GM23248 (cell line): ENCODE measurements at regions of chr5 and their contacts with region 1.

Region 1: DNA sequence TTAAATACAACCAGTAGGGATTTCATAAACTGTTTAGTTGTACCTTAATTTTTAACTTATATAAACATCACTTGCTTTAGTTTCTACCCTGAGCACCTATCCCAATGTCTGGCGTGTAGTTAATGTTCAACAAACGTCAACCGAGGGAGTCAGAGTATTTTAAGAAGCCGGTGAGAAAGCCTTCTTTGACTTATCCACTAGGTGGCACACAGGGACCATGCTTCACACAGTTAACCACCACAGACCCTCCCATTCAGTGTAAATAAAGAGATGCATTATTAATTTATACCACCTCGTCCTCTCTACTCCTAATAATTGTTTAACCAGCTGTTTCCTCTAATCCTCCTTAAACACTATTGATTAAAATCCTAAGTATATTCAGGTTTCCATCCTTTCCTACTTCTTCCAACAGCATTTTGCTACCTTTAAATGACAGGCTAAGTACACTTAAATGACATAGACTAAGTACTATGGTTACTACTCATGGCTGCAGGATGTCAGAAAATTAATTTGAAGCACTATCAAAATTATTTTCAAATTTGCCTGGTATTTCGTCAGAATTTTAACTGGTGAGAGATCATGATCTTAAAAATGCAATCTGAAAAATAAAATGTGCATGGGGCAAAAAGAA is 2.3 kb downstream of the HAPLN1 start:
- DNase-seq: peak; percentile 83
- H3K4me3 ChIP-seq: peak overlapping the region; percentile 75
- H3K27ac ChIP-seq: no peak overlapping the region
- H3K4me1 ChIP-seq: peaks cover 6% of the 10 kb centered on the region; the same call in 1 of the 2 replicates
- H3K27me3 ChIP-seq: 0 out of 2 replicates have a peak, but pooled peaks cover 8% of the 10 kb centered on the region

Region 2: GRCh38 chr5:84149094-84149493 is 430.8 kb after region 1 on chr5:
- in situ Hi-C with region 1: no loop called
- DNase-seq: no peak
- H3K4me3 ChIP-seq: no peak overlapping the region
- H3K27ac ChIP-seq: no peak overlapping the region
- H3K4me1 ChIP-seq: no peaks in the 10 kb centered on the region
- H3K27me3 ChIP-seq: no peaks in the 10 kb centered on the region

Region 3: DNA sequence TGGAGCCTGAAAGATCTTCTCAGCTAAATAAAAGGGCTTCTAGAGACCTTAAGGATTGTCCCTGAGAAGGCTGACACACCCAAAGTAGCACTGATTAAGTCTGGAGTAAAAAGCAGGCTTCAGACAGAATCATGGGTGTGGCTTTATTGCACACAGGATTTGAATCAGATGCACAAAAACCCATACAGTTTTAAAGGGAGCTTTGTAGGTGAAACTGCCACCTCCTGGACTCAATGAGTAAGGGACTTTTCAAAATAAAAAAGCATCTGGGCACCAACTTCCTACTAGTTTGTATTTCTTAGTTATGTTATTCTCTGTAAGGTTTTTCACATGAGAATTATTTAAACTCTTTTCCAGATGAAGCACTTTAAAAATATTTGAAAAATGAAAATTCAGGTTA is 537.0 kb after region 1 on chr5:
- in situ Hi-C with region 1: loop called (anchors 10 kb)
- DNase-seq: peak; percentile 74
- H3K4me3 ChIP-seq: no peak overlapping the region
- H3K27ac ChIP-seq: no peak overlapping the region
- H3K4me1 ChIP-seq: peaks cover 5% of the 10 kb centered on the region
- H3K27me3 ChIP-seq: no peaks in the 10 kb centered on the region

Region 4: GRCh38 chr5:84450617-84451414 is 732.5 kb after region 1 on chr5:
- in situ Hi-C with region 1: loop called (anchors 25 kb)
- DNase-seq: peak; percentile 41
- H3K4me3 ChIP-seq: no peak overlapping the region
- H3K27ac ChIP-seq: no peak overlapping the region
- H3K4me1 ChIP-seq: no peaks in the 10 kb centered on the region
- H3K27me3 ChIP-seq: no peaks in the 10 kb centered on the region; the same call in none of the 2 replicates